CD4-positive, alpha-beta memory T cell (primary cell): ENCODE measurements at regions of chr17 and their contacts with region 1.

Region 1: GRCh38 chr17:40113110-40113906 is 8.5 kb upstream of the MSL1 start:
- DNase-seq: peak; percentile 92 to 97 (median 93)
- H3K4me3 ChIP-seq: peak overlapping the region; percentile 47 to 64
- H3K4me3 Mint-ChIP-seq: peak overlapping the region; percentile 83 to 93 (median 86)
- H3K27ac ChIP-seq: peak overlapping the region; percentile 51
- H3K27ac Mint-ChIP-seq: peak overlapping the region; percentile 87 to 100 (median 95)
- H3K4me1 ChIP-seq: peaks cover 59% of the 10 kb centered on the region
- H3K4me1 Mint-ChIP-seq: peaks cover 40 to 60% (median 52%) of the 10 kb centered on the region in 4 donors
- H3K27me3 ChIP-seq: no peaks in the 10 kb centered on the region
- H3K27me3 Mint-ChIP-seq: no peaks in the 10 kb centered on the region

Region 2: GRCh38 chr17:39996800-39997199 is 116.5 kb before region 1 on chr17:
- CTCF ChIA-PET with region 1: no interaction called
- POLR2A ChIA-PET with region 1: no interaction called
- intact Hi-C with region 1: no loop called
- DNase-seq: no peak
- H3K4me3 ChIP-seq: no peak overlapping the region
- H3K4me3 Mint-ChIP-seq: no peak overlapping the region
- H3K27ac ChIP-seq: no peak overlapping the region
- H3K27ac Mint-ChIP-seq: peak overlapping the region in 1 of 7 donors; percentile 17
- H3K4me1 ChIP-seq: no peaks in the 10 kb centered on the region
- H3K4me1 Mint-ChIP-seq: peaks cover 0 to 1% (median 0%) of the 10 kb centered on the region in 4 donors
- H3K27me3 ChIP-seq: no peaks in the 10 kb centered on the region
- H3K27me3 Mint-ChIP-seq: no peaks in the 10 kb centered on the region

Region 3: GRCh38 chr17:40026816-40027613 is 86.3 kb before region 1 on chr17:
- CTCF ChIA-PET with region 1: interaction called, 56 read pairs
- POLR2A ChIA-PET with region 1: interaction called, 4 read pairs
- intact Hi-C with region 1: no loop called
- DNase-seq: peak; percentile 67 to 78 (median 69)
- H3K4me3 ChIP-seq: no peak overlapping the region
- H3K4me3 Mint-ChIP-seq: peak overlapping the region in 3 of 8 donors; percentile 46 to 75 (median 56)
- H3K27ac ChIP-seq: no peak overlapping the region
- H3K27ac Mint-ChIP-seq: peak overlapping the region in 4 of 7 donors; percentile 15 to 52 (median 32)
- H3K4me1 ChIP-seq: peaks cover 25% of the 10 kb centered on the region
- H3K4me1 Mint-ChIP-seq: peaks cover 19 to 24% (median 21%) of the 10 kb centered on the region in 4 donors
- H3K27me3 ChIP-seq: no peaks in the 10 kb centered on the region
- H3K27me3 Mint-ChIP-seq: no peaks in the 10 kb centered on the region

Region 4: GRCh38 chr17:40068917-40069750 is 44.2 kb before region 1 on chr17:
- CTCF ChIA-PET with region 1: interaction called, 543 read pairs
- POLR2A ChIA-PET with region 1: interaction called, 178 read pairs
- intact Hi-C with region 1: loop called (anchors 2 kb)
- DNase-seq: peak; percentile 72 to 82 (median 77)
- H3K4me3 ChIP-seq: peak overlapping the region; percentile 47 to 71
- H3K4me3 Mint-ChIP-seq: peak overlapping the region; percentile 85 to 92 (median 88)
- H3K27ac ChIP-seq: peak overlapping the region; percentile 54
- H3K27ac Mint-ChIP-seq: peak overlapping the region; percentile 93 to 96 (median 95)
- H3K4me1 ChIP-seq: peaks cover 79% of the 10 kb centered on the region
- H3K4me1 Mint-ChIP-seq: peaks cover 53 to 83% (median 69%) of the 10 kb centered on the region in 4 donors
- H3K27me3 ChIP-seq: no peaks in the 10 kb centered on the region
- H3K27me3 Mint-ChIP-seq: no peaks in the 10 kb centered on the region

Region 5: GRCh38 chr17:40098846-40099618 is 14.3 kb before region 1 on chr17:
- CTCF ChIA-PET with region 1: interaction called, 217 read pairs
- POLR2A ChIA-PET with region 1: interaction called, 494 read pairs
- intact Hi-C with region 1: loop called (anchors 1 kb)
- DNase-seq: peak; percentile 98 to 100 (median 99)
- H3K4me3 ChIP-seq: peak overlapping the region; percentile 73 to 96
- H3K4me3 Mint-ChIP-seq: peak overlapping the region; percentile 80 to 99 (median 98)
- H3K27ac ChIP-seq: peak overlapping the region; percentile 92
- H3K27ac Mint-ChIP-seq: peak overlapping the region; percentile 86 to 99 (median 94)
- H3K4me1 ChIP-seq: peaks cover 90% of the 10 kb centered on the region
- H3K4me1 Mint-ChIP-seq: peaks cover 61 to 95% (median 79%) of the 10 kb centered on the region in 4 donors
- H3K27me3 ChIP-seq: no peaks in the 10 kb centered on the region
- H3K27me3 Mint-ChIP-seq: no peaks in the 10 kb centered on the region

Region 6: GRCh38 chr17:40157973-40158372 is 44.7 kb after region 1 on chr17:
- CTCF ChIA-PET with region 1: interaction called, 19 read pairs
- POLR2A ChIA-PET with region 1: interaction called, 3 read pairs
- intact Hi-C with region 1: no loop called
- DNase-seq: no peak
- H3K4me3 ChIP-seq: no peak overlapping the region
- H3K4me3 Mint-ChIP-seq: no peak overlapping the region
- H3K27ac ChIP-seq: no peak overlapping the region
- H3K27ac Mint-ChIP-seq: peak overlapping the region; percentile 4 to 85 (median 71)
- H3K4me1 ChIP-seq: peaks cover 5% of the 10 kb centered on the region
- H3K4me1 Mint-ChIP-seq: peaks cover 11 to 39% (median 28%) of the 10 kb centered on the region in 4 donors
- H3K27me3 ChIP-seq: no peaks in the 10 kb centered on the region
- H3K27me3 Mint-ChIP-seq: no peaks in the 10 kb centered on the region

Region 7: DNA sequence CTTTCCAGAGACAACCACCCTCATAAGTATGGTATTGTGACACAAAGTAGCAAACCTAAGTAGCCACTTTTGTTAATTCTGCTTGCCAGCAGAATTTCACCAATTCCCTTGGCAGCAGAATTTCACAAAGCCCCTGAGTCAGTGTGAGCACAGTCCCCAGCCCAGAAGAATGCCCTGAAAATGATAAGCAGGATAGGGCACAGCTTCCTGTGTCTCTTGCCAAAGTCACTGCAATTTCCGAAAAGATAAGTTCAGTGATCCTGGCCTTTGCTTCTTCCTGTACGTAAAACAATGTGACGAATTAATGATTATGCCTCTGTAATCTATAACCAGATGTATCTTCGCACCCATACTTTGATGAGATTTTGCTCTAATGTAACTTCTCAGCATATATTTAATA is 89.8 kb after region 1 on chr17:
- CTCF ChIA-PET with region 1: interaction called, 26 read pairs
- POLR2A ChIA-PET with region 1: interaction called, 3 read pairs
- intact Hi-C with region 1: no loop called
- DNase-seq: no peak
- H3K4me3 ChIP-seq: no peak overlapping the region
- H3K4me3 Mint-ChIP-seq: no peak overlapping the region
- H3K27ac ChIP-seq: no peak overlapping the region
- H3K27ac Mint-ChIP-seq: peak overlapping the region in 1 of 7 donors; percentile 50
- H3K4me1 ChIP-seq: no peaks in the 10 kb centered on the region
- H3K4me1 Mint-ChIP-seq: peaks cover 0 to 6% (median 2%) of the 10 kb centered on the region in 4 donors
- H3K27me3 ChIP-seq: no peaks in the 10 kb centered on the region
- H3K27me3 Mint-ChIP-seq: peaks cover 1 to 7% of the 10 kb centered on the region in 2 donors